ENCODE measurements at regions of chr10 and their contacts with region 1.

Region 1: GRCh38 chr10:90018819-90019218 is 317.4 kb downstream of the KIF20B start:
- DNase-seq: no peak
- ATAC-seq: no peak
- H3K4me3 ChIP-seq: no peak overlapping the region
- H3K4me3 Mint-ChIP-seq: no peak overlapping the region
- H3K27ac ChIP-seq: no peak overlapping the region
- H3K27ac Mint-ChIP-seq: no peak overlapping the region
- H3K4me1 ChIP-seq: no peaks in the 10 kb centered on the region
- H3K4me1 Mint-ChIP-seq: peaks cover 4% of the 10 kb centered on the region
- H3K27me3 ChIP-seq: no peaks in the 10 kb centered on the region
- H3K27me3 Mint-ChIP-seq: no peaks in the 10 kb centered on the region
- CTCF ChIP-seq: no peak

Region 2: DNA sequence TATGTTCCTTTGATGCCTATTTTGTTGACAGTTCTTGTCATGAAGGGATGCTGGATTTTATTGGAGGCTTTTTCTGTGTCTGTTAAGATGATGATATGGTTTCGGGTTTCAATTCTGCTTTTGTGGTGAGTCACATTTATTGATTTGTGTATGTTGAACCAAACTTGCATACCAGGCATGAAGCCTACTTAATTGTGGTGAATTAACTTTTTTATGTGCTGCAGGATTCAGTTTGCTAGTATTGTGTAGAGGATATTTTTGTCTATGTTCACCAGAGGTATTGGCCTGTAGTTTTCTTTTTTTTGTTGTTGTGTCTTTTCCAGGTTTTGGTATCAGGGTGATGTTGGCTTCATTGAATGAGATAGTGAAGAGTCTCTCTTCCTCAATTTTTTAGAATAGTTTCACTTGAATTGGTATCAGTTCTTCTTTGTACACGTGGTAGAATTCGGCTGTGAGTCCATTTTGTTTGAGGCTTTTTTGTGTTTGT is 28.5 kb after region 1 on chr10:
- CTCF ChIA-PET with region 1: no interaction called
- POLR2A ChIA-PET with region 1: no interaction called
- intact Hi-C with region 1: loop called (anchors 1 kb)
- DNase-seq: peak; percentile 82
- ATAC-seq: peak; percentile 79
- H3K4me3 ChIP-seq: no peak overlapping the region
- H3K4me3 Mint-ChIP-seq: peak overlapping the region; percentile 49
- H3K27ac ChIP-seq: peak overlapping the region; percentile 30 to 31
- H3K27ac Mint-ChIP-seq: peak overlapping the region; percentile 80
- H3K4me1 ChIP-seq: peaks cover 26 to 36% of the 10 kb centered on the region in 2 donors
- H3K4me1 Mint-ChIP-seq: peaks cover 44% of the 10 kb centered on the region
- H3K27me3 ChIP-seq: peaks cover 0 to 9% (median 2%) of the 10 kb centered on the region in 4 experiments
- H3K27me3 Mint-ChIP-seq: no peaks in the 10 kb centered on the region
- CTCF ChIP-seq: no peak

Region 3: GRCh38 chr10:90484518-90484917 is 465.7 kb after region 1 on chr10:
- CTCF ChIA-PET with region 1: no interaction called
- POLR2A ChIA-PET with region 1: no interaction called
- intact Hi-C with region 1: no loop called
- DNase-seq: no peak
- ATAC-seq: no peak
- H3K4me3 ChIP-seq: no peak overlapping the region
- H3K4me3 Mint-ChIP-seq: no peak overlapping the region
- H3K27ac ChIP-seq: no peak overlapping the region
- H3K27ac Mint-ChIP-seq: no peak overlapping the region
- H3K4me1 ChIP-seq: no peaks in the 10 kb centered on the region
- H3K4me1 Mint-ChIP-seq: no peaks in the 10 kb centered on the region
- H3K27me3 ChIP-seq: peaks cover 0 to 3% (median 1%) of the 10 kb centered on the region in 4 experiments
- H3K27me3 Mint-ChIP-seq: peaks cover 13% of the 10 kb centered on the region
- CTCF ChIP-seq: no peak